WTC11 (cell line): ENCODE measurements at regions of chr4 and their contacts with region 1.

Region 1: GRCh38 chr4:173013232-173013930 is 155.2 kb upstream of the GALNT7 start:
- DNase-seq: peak; percentile 66
- ATAC-seq: peak; percentile 23
- H3K4me3 Mint-ChIP-seq: no peak overlapping the region
- H3K27ac Mint-ChIP-seq: no peak overlapping the region
- H3K4me1 Mint-ChIP-seq: peaks cover 39% of the 10 kb centered on the region
- H3K27me3 Mint-ChIP-seq: no peaks in the 10 kb centered on the region
- CTCF ChIP-seq: peak; percentile 77

Region 2: DNA sequence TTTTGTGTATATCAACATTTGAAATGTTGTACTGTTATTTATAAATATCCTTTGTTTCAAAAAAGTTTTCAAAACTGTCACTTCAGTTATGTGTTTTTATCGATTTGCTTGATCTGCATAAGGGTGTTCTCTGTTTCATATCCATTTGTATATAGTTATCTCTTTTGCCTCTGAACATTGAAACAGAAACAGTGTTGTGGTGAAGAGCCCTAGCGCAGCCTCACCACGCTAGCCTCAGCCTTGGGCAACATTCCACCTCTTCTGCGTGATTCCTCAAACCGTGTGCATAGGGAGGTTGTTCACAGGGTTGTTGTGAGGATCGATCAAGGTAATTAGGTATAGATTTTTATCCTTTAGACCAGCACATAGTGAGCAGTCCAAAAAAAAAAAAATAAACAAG is 131.7 kb before region 1 on chr4:
- CTCF ChIA-PET with region 1: no interaction called
- POLR2A ChIA-PET with region 1: no interaction called
- DNase-seq: no peak
- ATAC-seq: no peak
- H3K4me3 Mint-ChIP-seq: no peak overlapping the region
- H3K27ac Mint-ChIP-seq: no peak overlapping the region
- H3K4me1 Mint-ChIP-seq: no peaks in the 10 kb centered on the region
- H3K27me3 Mint-ChIP-seq: no peaks in the 10 kb centered on the region
- CTCF ChIP-seq: no peak

Region 3: GRCh38 chr4:172892300-172892699 is 121.1 kb before region 1 on chr4:
- CTCF ChIA-PET with region 1: interaction called, 19 read pairs
- POLR2A ChIA-PET with region 1: interaction called, 3 read pairs
- DNase-seq: peak; percentile 31
- ATAC-seq: peak; percentile 84
- H3K4me3 Mint-ChIP-seq: no peak overlapping the region
- H3K27ac Mint-ChIP-seq: no peak overlapping the region
- H3K4me1 Mint-ChIP-seq: no peaks in the 10 kb centered on the region; the same call in 1 of the 2 replicates
- H3K27me3 Mint-ChIP-seq: no peaks in the 10 kb centered on the region
- CTCF ChIP-seq: peak; percentile 87

Region 4: DNA sequence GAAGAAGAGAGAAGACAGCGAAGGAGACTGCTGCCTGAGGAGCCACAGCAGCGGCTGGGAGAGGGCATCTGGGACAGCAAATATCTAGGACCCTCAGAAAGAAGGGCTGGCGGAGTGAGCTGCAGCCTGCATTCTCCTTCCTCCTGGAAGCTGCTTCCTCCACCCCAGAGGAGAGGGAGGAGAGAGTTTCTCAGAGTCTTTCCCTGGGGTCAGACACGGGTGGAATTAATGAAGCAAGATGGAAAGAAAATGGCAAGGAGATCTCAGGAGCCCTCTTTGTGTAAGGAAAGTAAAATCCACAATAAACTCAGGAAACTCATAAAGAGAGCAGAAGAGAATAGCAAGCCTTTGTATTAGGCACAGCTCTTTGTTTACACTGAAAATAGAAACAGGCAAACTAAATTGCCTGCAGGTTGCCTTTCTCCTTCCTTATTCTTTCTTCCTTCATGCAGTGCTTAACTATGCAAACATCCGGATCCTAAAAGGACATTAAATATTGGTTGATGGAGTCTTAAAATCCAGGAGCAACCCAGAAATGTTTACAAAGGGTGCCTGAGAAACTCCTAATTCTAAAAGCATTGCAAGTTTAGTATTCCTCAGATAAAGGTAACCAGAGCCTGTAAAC is 25.0 kb after region 1 on chr4:
- CTCF ChIA-PET with region 1: interaction called, 10 read pairs
- POLR2A ChIA-PET with region 1: no interaction called
- DNase-seq: no peak
- ATAC-seq: peak; percentile 71
- H3K4me3 Mint-ChIP-seq: no peak overlapping the region
- H3K27ac Mint-ChIP-seq: peak overlapping the region; percentile 71
- H3K4me1 Mint-ChIP-seq: peaks cover 58% of the 10 kb centered on the region
- H3K27me3 Mint-ChIP-seq: no peaks in the 10 kb centered on the region; the same call in 1 of the 2 replicates
- CTCF ChIP-seq: no peak

Region 5: DNA sequence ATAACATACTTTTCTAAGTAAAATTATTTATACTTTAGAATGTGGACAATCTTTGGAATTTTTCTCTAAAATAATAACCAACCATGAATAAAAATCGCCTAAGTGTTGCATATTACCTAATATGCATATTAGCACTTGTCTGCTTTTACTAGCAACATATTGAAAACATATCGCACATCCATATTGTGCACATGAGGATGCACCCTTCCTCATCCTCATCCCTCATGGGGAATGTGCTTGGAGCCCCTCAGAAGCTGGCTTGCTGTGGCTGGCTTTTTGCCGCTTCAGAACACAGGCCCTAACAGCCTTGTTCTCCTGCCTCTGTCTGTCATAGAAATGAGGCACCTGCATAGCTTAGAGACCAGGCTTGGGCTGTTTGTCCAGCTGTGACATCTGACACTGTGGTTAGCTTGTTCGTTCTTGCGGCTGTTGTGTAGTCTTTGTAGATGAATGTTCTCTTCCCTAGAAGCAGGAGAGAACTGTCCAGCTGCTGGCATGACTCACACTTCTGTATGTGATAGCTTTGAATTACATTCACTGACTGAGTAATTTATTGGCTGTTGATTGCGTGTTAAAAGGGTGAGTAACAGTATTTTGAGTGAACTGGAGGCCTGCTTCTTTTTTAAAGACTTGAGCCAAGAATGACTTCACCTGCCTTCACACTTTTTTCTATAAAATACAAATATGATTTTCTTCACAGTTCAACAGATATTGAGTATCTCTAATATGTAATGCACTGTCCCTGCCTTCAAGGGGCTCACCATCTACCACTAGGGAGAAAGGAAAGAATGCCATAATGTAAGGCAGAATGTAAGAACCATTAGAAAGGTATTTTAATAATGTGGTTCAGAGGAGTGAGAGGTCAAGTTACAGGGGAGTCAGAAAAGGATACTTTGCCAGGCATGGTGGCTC is 238.9 kb after region 1 on chr4:
- CTCF ChIA-PET with region 1: interaction called, 133 read pairs
- POLR2A ChIA-PET with region 1: interaction called, 3 read pairs
- DNase-seq: peak; percentile 17
- ATAC-seq: peak; percentile 38
- H3K4me3 Mint-ChIP-seq: no peak overlapping the region
- H3K27ac Mint-ChIP-seq: no peak overlapping the region
- H3K4me1 Mint-ChIP-seq: peaks cover 85% of the 10 kb centered on the region
- H3K27me3 Mint-ChIP-seq: no peaks in the 10 kb centered on the region
- CTCF ChIP-seq: no peak

Region 6: GRCh38 chr4:173301518-173302201 is 288.3 kb after region 1 on chr4:
- CTCF ChIA-PET with region 1: interaction called, 107 read pairs
- POLR2A ChIA-PET with region 1: no interaction called
- DNase-seq: no peak
- ATAC-seq: no peak
- H3K4me3 Mint-ChIP-seq: no peak overlapping the region
- H3K27ac Mint-ChIP-seq: no peak overlapping the region
- H3K4me1 Mint-ChIP-seq: peaks cover 10% of the 10 kb centered on the region
- H3K27me3 Mint-ChIP-seq: no peaks in the 10 kb centered on the region
- CTCF ChIP-seq: peak; percentile 64

Region 7: DNA sequence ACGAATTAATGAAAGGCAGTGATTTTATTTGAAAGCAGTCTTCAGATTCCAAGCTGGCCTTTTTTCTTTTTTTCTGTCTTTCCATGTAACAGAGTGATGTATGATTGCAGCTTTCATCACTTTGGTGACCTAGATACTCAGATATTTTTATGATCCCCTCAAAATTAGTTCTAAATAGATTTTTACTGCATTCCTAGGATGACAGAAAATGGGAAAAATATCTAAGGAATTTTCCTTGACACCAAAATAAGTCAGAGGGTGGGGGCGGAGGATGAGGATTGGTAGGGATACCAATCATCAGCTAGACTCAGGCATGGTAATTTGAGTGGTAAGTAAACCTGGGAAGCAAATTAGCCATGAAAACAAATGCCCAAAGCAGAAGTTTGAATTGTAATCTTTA is 332.7 kb after region 1 on chr4:
- CTCF ChIA-PET with region 1: interaction called, 11 read pairs
- POLR2A ChIA-PET with region 1: no interaction called
- DNase-seq: no peak
- ATAC-seq: no peak
- H3K4me3 Mint-ChIP-seq: no peak overlapping the region
- H3K27ac Mint-ChIP-seq: no peak overlapping the region; the same call in 1 of the 2 replicates
- H3K4me1 Mint-ChIP-seq: peaks cover 34% of the 10 kb centered on the region
- H3K27me3 Mint-ChIP-seq: no peaks in the 10 kb centered on the region
- CTCF ChIP-seq: no peak